Naive thymus-derived CD4-positive, alpha-beta T cell (primary cell): ENCODE measurements at regions of chr19 and their contacts with region 1.

Region 1: DNA sequence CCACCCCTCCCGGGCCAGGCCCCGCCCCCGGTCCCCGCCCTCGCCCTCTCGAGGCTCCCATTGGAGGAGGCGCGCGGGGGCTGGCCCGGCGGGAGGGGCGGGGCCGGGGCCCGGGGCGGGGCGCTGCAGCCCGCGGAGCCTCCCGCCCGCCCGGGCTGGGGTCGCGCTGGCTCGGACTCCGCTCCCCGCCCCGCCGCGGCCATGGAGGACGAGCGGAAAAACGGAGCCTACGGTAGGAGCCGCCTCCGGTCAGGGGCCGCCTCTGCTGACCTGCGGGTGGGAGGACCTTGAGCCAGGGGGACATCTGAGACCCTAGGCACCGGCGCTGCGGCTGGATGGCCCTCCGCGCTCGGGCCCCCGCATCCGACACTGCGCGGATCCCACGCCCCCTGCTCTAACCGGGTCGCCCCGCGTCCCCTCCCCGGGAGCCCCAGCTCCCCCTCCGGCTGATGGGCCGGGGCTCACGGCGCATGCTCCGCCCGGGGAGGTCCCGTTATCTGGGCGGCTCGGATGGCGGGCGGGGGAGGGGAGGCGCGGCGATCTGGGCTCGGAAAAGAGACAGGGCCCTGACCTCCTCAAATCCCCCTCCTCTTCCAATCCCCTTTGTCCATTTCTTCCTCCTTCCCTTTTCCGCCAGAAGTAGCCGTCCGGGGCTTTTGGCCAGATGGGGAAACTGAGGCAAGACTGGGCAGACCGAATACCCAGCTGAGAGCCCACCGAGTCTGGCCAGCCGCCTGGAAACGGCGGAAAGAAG is 15.4 kb upstream of the AP1M2 start:
- DNase-seq: peak; percentile 73 to 89 (median 86)
- ATAC-seq: peak; percentile 93
- H3K4me3 ChIP-seq: peak overlapping the region; percentile 92
- H3K4me3 Mint-ChIP-seq: peak overlapping the region; percentile 97 to 100 (median 99)
- H3K27ac ChIP-seq: peak overlapping the region; percentile 100
- H3K27ac Mint-ChIP-seq: peak overlapping the region; percentile 94 to 100 (median 100)
- H3K4me1 ChIP-seq: peaks cover 15 to 20% of the 10 kb centered on the region in 2 donors
- H3K4me1 Mint-ChIP-seq: peaks cover 18 to 37% (median 31%) of the 10 kb centered on the region in 7 donors
- H3K27me3 ChIP-seq: no peaks in the 10 kb centered on the region
- H3K27me3 Mint-ChIP-seq: peaks cover 0 to 12% (median 0%) of the 10 kb centered on the region in 5 donors

Region 2: GRCh38 chr19:10551698-10552301 is 50.7 kb before region 1 on chr19:
- CTCF ChIA-PET with region 1: no interaction called
- POLR2A ChIA-PET with region 1: interaction called, 15 read pairs
- intact Hi-C with region 1: no loop called
- DNase-seq: peak in 6 of 9 donors; percentile 23 to 42 (median 35)
- ATAC-seq: peak; percentile 24
- H3K4me3 ChIP-seq: no peak overlapping the region
- H3K4me3 Mint-ChIP-seq: peak overlapping the region in 2 of 10 donors; percentile 25 to 42
- H3K27ac ChIP-seq: peak overlapping the region; percentile 66
- H3K27ac Mint-ChIP-seq: peak overlapping the region; percentile 44 to 96 (median 76)
- H3K4me1 ChIP-seq: peaks cover 41 to 54% of the 10 kb centered on the region in 2 donors
- H3K4me1 Mint-ChIP-seq: peaks cover 22 to 63% (median 41%) of the 10 kb centered on the region in 7 donors
- H3K27me3 ChIP-seq: no peaks in the 10 kb centered on the region
- H3K27me3 Mint-ChIP-seq: no peaks in the 10 kb centered on the region

Region 3: GRCh38 chr19:10612491-10613119 is 10.1 kb after region 1 on chr19:
- CTCF ChIA-PET with region 1: interaction called, 3 read pairs
- POLR2A ChIA-PET with region 1: interaction called, 190 read pairs
- intact Hi-C with region 1: loop called in 1 of 2 experiments (anchors 1 kb)
- DNase-seq: no peak
- ATAC-seq: no peak
- H3K4me3 ChIP-seq: no peak overlapping the region
- H3K4me3 Mint-ChIP-seq: peak overlapping the region in 3 of 10 donors; percentile 21 to 56 (median 25)
- H3K27ac ChIP-seq: no peak overlapping the region
- H3K27ac Mint-ChIP-seq: peak overlapping the region in 6 of 9 donors; percentile 13 to 64 (median 48)
- H3K4me1 ChIP-seq: peaks cover 9 to 10% of the 10 kb centered on the region in 2 donors
- H3K4me1 Mint-ChIP-seq: peaks cover 9 to 56% (median 34%) of the 10 kb centered on the region in 7 donors
- H3K27me3 ChIP-seq: no peaks in the 10 kb centered on the region
- H3K27me3 Mint-ChIP-seq: no peaks in the 10 kb centered on the region

Region 4: GRCh38 chr19:10644260-10645007 is 41.9 kb after region 1 on chr19:
- CTCF ChIA-PET with region 1: interaction called, 27 read pairs
- POLR2A ChIA-PET with region 1: interaction called, 27 read pairs
- intact Hi-C with region 1: loop called (anchors 1 kb)
- DNase-seq: peak; percentile 73 to 89 (median 81)
- ATAC-seq: peak; percentile 95
- H3K4me3 ChIP-seq: no peak overlapping the region
- H3K4me3 Mint-ChIP-seq: no peak overlapping the region
- H3K27ac ChIP-seq: peak overlapping the region; percentile 35
- H3K27ac Mint-ChIP-seq: peak overlapping the region; percentile 38 to 89 (median 84)
- H3K4me1 ChIP-seq: peaks cover 0 to 8% of the 10 kb centered on the region in 2 donors
- H3K4me1 Mint-ChIP-seq: peaks cover 10 to 36% (median 24%) of the 10 kb centered on the region in 7 donors
- H3K27me3 ChIP-seq: no peaks in the 10 kb centered on the region
- H3K27me3 Mint-ChIP-seq: peaks cover 0 to 2% (median 0%) of the 10 kb centered on the region in 5 donors

Region 5: GRCh38 chr19:10835754-10836477 is 233.4 kb after region 1 on chr19 and contains the start of gene TMED1:
- CTCF ChIA-PET with region 1: no interaction called
- POLR2A ChIA-PET with region 1: interaction called, 3 read pairs
- intact Hi-C with region 1: loop called in 1 of 2 experiments (anchors 1 kb)
- DNase-seq: peak; percentile 81 to 97 (median 93)
- ATAC-seq: peak; percentile 92
- H3K4me3 ChIP-seq: peak within 1 kb of the TSS; percentile 98
- H3K4me3 Mint-ChIP-seq: peak within 1 kb of the TSS; percentile 82 to 99 (median 96)
- H3K27ac ChIP-seq: peak within 1 kb of the TSS; percentile 93
- H3K27ac Mint-ChIP-seq: peak within 1 kb of the TSS; percentile 98 to 100 (median 99)
- H3K4me1 ChIP-seq: peaks cover 8 to 13% of the 10 kb centered on the region in 2 donors
- H3K4me1 Mint-ChIP-seq: peaks cover 12 to 20% (median 15%) of the 10 kb centered on the region in 7 donors
- H3K27me3 ChIP-seq: no peaks in the 10 kb centered on the region
- H3K27me3 Mint-ChIP-seq: no peaks in the 10 kb centered on the region
- total RNA-seq, gene TMED1: 7.6 to 12.8 (median 9.9) TPM